Cardiac septum (tissue), 1 donor: ENCODE measurements at regions of chr11 and their contacts with region 1.

Region 1: GRCh38 chr11:33172996-33173395 is 11.7 kb upstream of the CSTF3 start:
- DNase-seq: no peak

Region 2: DNA sequence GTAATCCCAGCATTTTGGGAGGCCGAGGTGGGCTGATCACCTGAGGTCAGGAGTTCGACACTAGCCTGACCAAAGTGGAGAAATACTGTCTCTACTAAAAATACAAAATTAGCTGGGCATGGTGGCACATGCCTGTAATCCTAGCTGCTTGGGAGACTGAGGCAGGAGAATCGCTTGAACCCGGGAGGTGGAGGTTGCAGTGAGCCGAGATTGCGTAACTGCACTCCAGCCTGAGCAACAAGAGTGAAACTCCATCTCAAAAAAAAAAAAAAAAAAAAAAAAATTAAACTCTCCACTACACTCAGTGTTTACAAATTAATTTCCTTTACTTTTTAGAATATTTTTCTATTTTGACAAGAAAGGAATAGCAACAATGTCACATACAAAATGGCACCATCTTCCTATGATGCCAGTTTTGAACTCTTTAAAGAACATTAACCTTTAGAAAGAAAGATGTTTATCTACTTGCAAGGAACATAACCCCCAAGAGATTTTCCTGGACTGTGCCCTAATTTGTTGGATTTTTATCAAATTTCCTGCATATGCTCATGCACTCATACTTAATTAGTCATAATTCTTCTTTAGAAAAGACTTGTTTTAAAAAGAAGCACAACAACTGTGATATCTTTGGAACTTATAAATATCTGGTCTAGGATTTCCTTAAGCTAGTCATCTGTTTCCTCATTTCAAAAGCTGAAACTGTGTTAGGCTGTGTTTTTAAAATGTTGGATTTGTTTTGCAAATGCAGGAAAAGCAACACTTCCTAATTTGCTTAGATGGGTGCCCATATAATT is 61.6 kb after region 1 on chr11:
- intact Hi-C with region 1: loop called (anchors 10 kb)
- DNase-seq: no peak